Panc1 (cell line): ENCODE measurements at regions of chr2 and their contacts with region 1.

Region 1: GRCh38 chr2:197804049-197804757 is at the start of gene PLCL1:
- DNase-seq: no peak
- ATAC-seq: peak; percentile 98
- H3K4me3 ChIP-seq: peak within 1 kb of the TSS; percentile 33 to 48
- H3K27ac ChIP-seq: no peak within 1 kb of the TSS
- H3K4me1 ChIP-seq: no peaks in the 10 kb centered on the region; the same call in 1 of the 2 replicates
- H3K27me3 ChIP-seq: peaks cover 60% of the 10 kb centered on the region
- CTCF ChIP-seq: no peak
- total RNA-seq, gene PLCL1: not detected

Region 2: GRCh38 chr2:197879812-197880408 is 75.7 kb after region 1 on chr2:
- CTCF ChIA-PET with region 1: interaction called, 10 read pairs
- POLR2A ChIA-PET with region 1: no interaction called
- in situ Hi-C with region 1: no loop called
- intact Hi-C with region 1: no loop called
- DNase-seq: no peak
- ATAC-seq: no peak
- H3K4me3 ChIP-seq: no peak overlapping the region
- H3K27ac ChIP-seq: no peak overlapping the region
- H3K4me1 ChIP-seq: no peaks in the 10 kb centered on the region
- H3K27me3 ChIP-seq: no peaks in the 10 kb centered on the region; the same call in 1 of the 2 replicates
- CTCF ChIP-seq: no peak

Region 3: GRCh38 chr2:197929008-197929885 is 125.0 kb after region 1 on chr2:
- CTCF ChIA-PET with region 1: no interaction called
- POLR2A ChIA-PET with region 1: no interaction called
- in situ Hi-C with region 1: no loop called
- intact Hi-C with region 1: no loop called
- DNase-seq: no peak
- ATAC-seq: no peak
- H3K4me3 ChIP-seq: no peak overlapping the region
- H3K27ac ChIP-seq: no peak overlapping the region
- H3K4me1 ChIP-seq: no peaks in the 10 kb centered on the region
- H3K27me3 ChIP-seq: 0 out of 2 replicates have a peak, but pooled peaks cover 3% of the 10 kb centered on the region
- CTCF ChIP-seq: no peak

Region 4: DNA sequence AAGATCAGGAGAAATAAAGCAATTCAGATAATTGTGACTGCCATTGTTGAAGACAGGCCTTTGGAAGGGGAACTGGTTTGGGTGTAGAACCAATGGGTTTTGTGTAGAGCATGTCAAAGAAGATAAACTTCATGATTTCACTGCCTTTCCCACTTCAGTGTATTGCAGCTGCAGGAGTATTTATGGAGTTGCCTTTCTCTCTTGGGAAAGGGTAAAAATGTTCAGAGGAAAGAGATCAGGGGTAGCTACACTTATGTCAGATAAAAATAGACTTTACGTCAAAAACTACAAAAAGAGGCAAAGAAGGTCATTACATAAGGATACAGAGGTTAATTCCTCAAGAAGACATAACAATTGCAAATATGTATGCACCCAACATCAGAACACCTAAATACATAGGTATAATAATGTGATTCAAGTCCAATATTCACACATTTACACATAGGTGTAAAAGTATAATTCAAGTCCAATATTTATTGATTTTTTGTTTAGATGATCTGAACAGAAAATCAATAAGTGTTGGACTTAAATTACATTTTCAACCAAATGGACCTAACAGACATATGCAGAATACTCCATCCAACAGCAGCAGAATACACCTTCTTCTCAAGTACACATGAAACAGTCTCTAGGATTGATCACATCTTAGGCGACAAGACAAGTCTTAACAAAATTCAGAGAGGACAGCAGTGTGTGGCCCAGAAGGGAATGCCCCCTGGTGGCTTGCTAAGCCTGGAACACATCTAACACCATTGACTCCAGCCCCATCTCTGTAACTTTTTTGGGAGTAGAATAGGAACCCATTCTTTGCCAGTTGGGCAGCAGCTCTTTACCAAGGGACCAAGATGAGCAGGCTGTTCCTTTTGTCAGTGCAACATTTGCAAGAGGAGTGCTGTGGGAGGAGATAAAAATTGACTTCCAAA is 249.8 kb after region 1 on chr2:
- CTCF ChIA-PET with region 1: no interaction called
- POLR2A ChIA-PET with region 1: no interaction called
- in situ Hi-C with region 1: no loop called
- intact Hi-C with region 1: loop called (anchors 5 kb)
- DNase-seq: no peak
- ATAC-seq: no peak
- H3K4me3 ChIP-seq: no peak overlapping the region
- H3K27ac ChIP-seq: no peak overlapping the region
- H3K4me1 ChIP-seq: no peaks in the 10 kb centered on the region
- H3K27me3 ChIP-seq: no peaks in the 10 kb centered on the region; the same call in 1 of the 2 replicates
- CTCF ChIP-seq: peak; percentile 53

Region 5: DNA sequence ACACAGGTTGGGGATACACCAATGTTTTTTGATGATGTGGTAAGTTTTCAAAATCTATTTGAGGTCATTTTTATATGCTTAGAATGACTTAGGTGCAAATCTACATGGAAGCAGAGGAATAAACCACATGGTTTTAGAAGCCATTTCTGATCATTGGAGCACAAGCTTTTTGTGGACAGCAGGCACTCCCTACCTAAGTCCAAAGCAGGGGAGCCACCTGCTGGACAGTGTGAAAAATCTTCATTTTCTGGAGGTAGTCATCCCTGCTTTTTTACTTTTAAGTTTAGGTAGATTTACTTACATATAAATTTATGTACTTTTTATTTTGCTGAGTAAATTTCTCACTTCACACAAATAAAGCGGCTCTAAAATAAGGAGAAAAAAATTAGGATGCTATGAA is 323.4 kb after region 1 on chr2:
- CTCF ChIA-PET with region 1: no interaction called
- POLR2A ChIA-PET with region 1: no interaction called
- in situ Hi-C with region 1: no loop called
- intact Hi-C with region 1: loop called (anchors 2 kb)
- DNase-seq: peak; percentile 28
- ATAC-seq: peak; percentile 82
- H3K4me3 ChIP-seq: no peak overlapping the region
- H3K27ac ChIP-seq: no peak overlapping the region
- H3K4me1 ChIP-seq: no peaks in the 10 kb centered on the region
- H3K27me3 ChIP-seq: peaks cover 6% of the 10 kb centered on the region; the same call in 1 of the 2 replicates
- CTCF ChIP-seq: peak; percentile 74

Region 6: DNA sequence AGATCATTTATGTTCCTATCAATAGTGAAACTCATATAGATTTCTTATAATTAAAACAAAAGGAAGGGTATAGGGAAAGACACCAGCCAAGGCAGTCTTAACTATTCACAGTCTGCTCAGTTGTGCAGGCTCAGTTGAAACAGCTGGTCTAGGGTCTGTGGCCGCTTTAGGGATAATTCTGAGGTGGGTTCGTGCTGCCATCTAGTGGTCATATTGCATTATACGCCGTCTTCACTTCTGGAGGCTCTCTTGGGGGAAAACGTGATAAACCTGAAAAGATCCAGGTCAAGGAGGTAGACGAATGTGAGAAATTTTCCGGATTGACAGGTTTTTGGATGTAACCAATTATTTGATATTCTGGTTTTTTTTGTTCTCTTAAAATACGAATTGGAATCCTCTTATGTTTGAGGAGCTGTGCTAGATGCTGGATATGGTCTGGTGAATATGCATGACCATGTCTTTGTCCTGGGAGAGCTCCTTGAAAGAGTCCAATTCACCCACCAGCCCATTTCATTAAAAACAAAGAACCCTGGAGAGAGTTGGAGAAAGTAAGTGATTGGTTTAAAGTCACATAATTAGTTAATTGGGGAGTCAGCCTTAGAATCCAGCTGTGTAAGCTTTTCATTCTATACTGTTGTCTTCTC is 492.6 kb after region 1 on chr2:
- CTCF ChIA-PET with region 1: interaction called, 5 read pairs
- POLR2A ChIA-PET with region 1: no interaction called
- in situ Hi-C with region 1: no loop called
- intact Hi-C with region 1: loop called (anchors 1 kb)
- DNase-seq: peak; percentile 38
- ATAC-seq: peak; percentile 88
- H3K4me3 ChIP-seq: no peak overlapping the region
- H3K27ac ChIP-seq: no peak overlapping the region
- H3K4me1 ChIP-seq: no peaks in the 10 kb centered on the region
- H3K27me3 ChIP-seq: 0 out of 2 replicates have a peak, but pooled peaks cover 4% of the 10 kb centered on the region
- CTCF ChIP-seq: peak; percentile 87